ENCODE measurements at regions of chr11 and their contacts with region 1.

Region 1: DNA sequence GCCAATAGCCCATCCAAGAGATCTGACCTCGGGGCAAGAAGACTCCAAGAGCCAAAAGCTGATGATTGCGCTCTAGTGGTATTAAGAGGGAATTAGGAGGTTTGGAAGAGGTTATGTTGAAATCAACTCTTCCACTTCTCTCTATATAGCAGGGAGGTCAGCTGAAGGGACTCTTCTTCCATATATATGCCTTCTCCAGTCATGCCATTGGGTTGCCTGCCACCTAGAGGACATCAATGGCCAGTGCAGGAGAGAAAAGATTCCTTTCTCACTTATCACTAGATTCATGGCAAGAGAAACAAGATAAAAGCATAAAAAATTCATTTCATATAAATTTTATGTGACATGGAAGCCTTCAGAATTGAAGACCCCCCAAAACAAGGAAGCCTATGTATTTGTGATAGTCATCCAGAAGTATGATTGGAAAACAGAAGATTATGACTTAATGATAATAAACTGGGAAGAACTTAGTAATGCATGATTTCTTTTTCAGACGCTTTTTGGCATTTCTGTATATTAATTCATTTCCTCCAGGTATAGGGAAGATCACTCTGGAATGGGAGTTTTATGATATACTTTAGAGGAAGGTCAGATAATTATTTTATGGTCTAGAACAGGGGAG is 435.1 kb upstream of the DDI1 start:
- DNase-seq: peak; percentile 49
- H3K4me3 Mint-ChIP-seq: no peak overlapping the region
- H3K27ac Mint-ChIP-seq: no peak overlapping the region
- H3K4me1 Mint-ChIP-seq: no peaks in the 10 kb centered on the region
- H3K27me3 Mint-ChIP-seq: peaks cover 9% of the 10 kb centered on the region

Region 2: DNA sequence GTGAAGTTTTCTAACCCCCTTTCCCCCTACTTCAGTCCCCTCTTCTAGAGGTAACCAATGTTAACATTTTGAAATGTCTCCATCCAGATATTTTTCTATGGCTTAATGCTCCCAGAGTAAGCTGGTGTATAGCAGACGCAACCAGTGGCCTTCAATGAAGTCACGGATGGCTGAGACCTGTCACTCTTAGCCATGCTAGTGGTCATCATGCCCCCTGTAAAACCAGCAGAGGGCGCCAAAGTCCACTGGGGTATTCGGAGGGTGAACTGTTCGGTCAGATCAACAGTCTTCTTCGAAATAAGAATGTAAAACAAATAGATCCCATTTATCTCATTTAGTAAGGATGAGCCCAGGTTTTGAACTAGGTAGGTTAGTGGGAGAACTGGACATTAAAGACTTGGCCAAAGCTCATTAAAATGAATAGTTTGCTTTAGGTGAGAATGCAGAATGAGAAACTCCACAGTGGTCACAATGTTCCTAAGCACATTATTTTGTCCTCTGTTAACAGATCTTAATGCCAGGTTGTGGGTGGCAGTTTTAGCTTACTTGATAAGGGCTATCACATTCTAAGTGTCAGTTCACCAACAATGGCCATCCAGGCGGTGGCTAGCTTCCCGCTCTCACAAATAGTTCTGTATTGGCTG is 868.0 kb before region 1 on chr11:
- CTCF ChIA-PET with region 1: no interaction called
- intact Hi-C with region 1: loop called (anchors 5 kb)
- DNase-seq: peak; percentile 77
- H3K4me3 Mint-ChIP-seq: no peak overlapping the region
- H3K27ac Mint-ChIP-seq: no peak overlapping the region
- H3K4me1 Mint-ChIP-seq: no peaks in the 10 kb centered on the region
- H3K27me3 Mint-ChIP-seq: peaks cover 4% of the 10 kb centered on the region

Region 3: GRCh38 chr11:102914238-102915043 is 686.9 kb before region 1 on chr11:
- CTCF ChIA-PET with region 1: no interaction called
- intact Hi-C with region 1: loop called (anchors 2 kb)
- DNase-seq: peak; percentile 30
- H3K4me3 Mint-ChIP-seq: no peak overlapping the region
- H3K27ac Mint-ChIP-seq: no peak overlapping the region
- H3K4me1 Mint-ChIP-seq: no peaks in the 10 kb centered on the region
- H3K27me3 Mint-ChIP-seq: peaks cover 11% of the 10 kb centered on the region

Region 4: DNA sequence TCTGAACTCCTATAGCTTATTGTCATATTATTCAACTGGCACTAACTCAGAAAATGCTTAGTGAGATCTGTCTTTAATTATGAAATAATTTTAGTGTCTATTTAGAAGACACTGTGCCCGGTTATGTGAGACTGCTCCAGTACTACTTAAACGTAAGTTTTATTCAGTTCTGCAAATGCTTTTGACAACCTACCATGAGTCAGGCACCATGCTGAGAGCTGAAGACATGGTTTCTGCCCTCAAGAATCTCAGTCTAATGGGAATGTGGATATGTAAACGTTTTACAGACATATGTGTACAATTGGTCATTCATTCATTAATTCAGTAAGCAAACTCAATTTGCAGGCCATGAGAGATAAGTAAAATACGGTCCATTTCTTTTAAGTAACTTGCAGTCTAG is 549.4 kb before region 1 on chr11:
- CTCF ChIA-PET with region 1: no interaction called
- intact Hi-C with region 1: no loop called
- DNase-seq: no peak
- H3K4me3 Mint-ChIP-seq: no peak overlapping the region
- H3K27ac Mint-ChIP-seq: peak overlapping the region; percentile 38
- H3K4me1 Mint-ChIP-seq: peaks cover 17% of the 10 kb centered on the region
- H3K27me3 Mint-ChIP-seq: no peaks in the 10 kb centered on the region

Region 5: DNA sequence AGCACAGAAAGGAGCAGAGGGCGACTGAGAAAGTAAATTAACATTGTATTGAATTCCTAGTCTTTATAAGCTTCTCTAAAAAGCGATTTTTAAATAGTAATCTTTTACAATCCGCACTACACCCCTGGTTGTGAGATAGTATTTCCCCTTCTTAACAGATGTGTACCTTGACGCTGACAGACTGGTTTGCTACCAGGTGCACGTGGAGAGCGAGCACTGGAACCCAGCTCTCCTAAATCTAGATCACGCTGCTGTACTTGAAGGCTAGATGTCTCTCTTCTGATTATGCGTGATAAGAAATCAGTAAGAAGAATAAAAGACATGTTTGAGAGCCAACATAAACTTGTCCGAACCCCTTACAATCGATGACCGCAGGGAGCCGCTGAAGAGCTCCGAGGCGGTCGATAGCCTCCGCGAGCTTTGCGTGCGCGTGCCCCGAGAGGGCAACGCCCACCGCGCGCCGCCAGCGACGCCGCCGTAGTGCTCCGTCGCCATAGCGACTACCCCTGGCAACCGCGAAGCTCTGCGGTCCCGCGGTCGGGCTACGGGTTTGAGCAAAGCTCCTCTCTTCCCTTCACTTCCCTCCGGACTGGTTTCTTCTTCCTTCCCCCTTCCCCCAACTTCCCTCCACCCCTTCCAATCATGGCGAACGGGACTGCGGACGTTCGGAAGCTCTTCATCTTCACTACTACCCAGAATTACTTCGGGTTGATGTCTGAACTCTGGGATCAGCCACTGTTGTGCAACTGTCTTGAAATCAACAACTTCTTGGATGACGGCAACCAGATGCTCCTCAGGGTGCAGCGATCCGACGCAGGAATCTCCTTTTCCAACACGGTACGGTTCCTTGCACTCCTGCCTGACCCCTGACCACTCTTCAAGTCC is 492.2 kb before region 1 on chr11 and contains the start of gene DYNC2H1:
- CTCF ChIA-PET with region 1: no interaction called
- intact Hi-C with region 1: loop called (anchors 1 kb)
- DNase-seq: peak; percentile 90
- H3K4me3 Mint-ChIP-seq: peak within 1 kb of the TSS; percentile 84
- H3K27ac Mint-ChIP-seq: peak within 1 kb of the TSS; percentile 72
- H3K4me1 Mint-ChIP-seq: peaks cover 7% of the 10 kb centered on the region
- H3K27me3 Mint-ChIP-seq: no peaks in the 10 kb centered on the region
- total RNA-seq, gene DYNC2H1: 1.9 to 2.8 TPM

Region 6: DNA sequence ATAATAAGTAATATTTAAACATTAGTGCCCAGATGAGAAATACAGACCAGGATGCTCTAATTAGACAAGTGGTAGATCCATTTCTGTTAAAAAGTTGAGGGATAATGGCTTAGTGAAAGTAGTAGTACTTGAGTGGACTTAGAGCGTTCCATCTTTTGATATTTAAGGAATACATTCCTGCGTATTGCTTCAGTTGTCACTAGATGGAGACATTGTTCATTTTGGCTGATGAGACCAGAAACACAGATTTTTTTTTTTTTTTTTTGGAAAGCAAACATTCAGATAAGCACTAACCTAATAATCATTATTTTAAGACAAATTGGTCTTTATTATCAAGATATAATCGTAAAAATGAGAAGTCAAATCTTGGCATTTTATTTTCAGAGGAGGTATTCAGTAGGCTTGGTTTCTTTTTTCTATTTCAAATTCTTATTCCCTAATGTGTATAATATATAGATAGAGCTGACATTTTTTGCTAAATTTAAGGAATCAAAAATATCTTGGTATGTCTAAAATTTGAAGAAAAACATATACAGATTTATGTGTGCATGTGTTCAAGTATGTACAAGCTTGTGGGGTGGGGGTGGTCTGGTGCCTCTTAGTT is 399.2 kb before region 1 on chr11:
- CTCF ChIA-PET with region 1: no interaction called
- intact Hi-C with region 1: loop called (anchors 1 kb)
- DNase-seq: no peak
- H3K4me3 Mint-ChIP-seq: no peak overlapping the region
- H3K27ac Mint-ChIP-seq: no peak overlapping the region
- H3K4me1 Mint-ChIP-seq: no peaks in the 10 kb centered on the region
- H3K27me3 Mint-ChIP-seq: no peaks in the 10 kb centered on the region

Region 7: DNA sequence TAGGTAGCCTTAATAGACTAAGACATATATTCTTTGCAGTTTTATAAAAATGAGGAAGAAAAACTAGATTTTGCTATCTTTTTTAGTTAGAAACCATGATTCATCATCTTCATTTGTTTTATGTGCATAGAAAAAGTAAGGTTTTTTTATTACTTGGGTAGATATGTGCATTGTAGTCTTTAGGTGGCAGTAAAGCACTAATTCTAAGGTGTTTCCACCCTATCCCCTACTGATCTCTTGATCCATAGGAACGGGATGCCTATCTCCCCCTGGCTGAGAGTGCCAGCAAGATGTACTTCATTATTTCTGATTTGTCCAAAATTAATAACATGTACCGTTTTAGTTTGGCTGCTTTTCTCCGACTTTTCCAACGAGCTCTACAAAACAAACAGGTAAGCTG is 344.0 kb before region 1 on chr11:
- CTCF ChIA-PET with region 1: no interaction called
- intact Hi-C with region 1: loop called (anchors 5 kb)
- DNase-seq: no peak
- H3K4me3 Mint-ChIP-seq: no peak overlapping the region
- H3K27ac Mint-ChIP-seq: no peak overlapping the region
- H3K4me1 Mint-ChIP-seq: no peaks in the 10 kb centered on the region
- H3K27me3 Mint-ChIP-seq: no peaks in the 10 kb centered on the region

Region 8: GRCh38 chr11:103326070-103326794 is 275.1 kb before region 1 on chr11:
- CTCF ChIA-PET with region 1: interaction called, 4 read pairs
- intact Hi-C with region 1: loop called (anchors 1 kb)
- DNase-seq: peak; percentile 37
- H3K4me3 Mint-ChIP-seq: no peak overlapping the region
- H3K27ac Mint-ChIP-seq: no peak overlapping the region
- H3K4me1 Mint-ChIP-seq: peaks cover 4% of the 10 kb centered on the region
- H3K27me3 Mint-ChIP-seq: peaks cover 5% of the 10 kb centered on the region

Region 9: DNA sequence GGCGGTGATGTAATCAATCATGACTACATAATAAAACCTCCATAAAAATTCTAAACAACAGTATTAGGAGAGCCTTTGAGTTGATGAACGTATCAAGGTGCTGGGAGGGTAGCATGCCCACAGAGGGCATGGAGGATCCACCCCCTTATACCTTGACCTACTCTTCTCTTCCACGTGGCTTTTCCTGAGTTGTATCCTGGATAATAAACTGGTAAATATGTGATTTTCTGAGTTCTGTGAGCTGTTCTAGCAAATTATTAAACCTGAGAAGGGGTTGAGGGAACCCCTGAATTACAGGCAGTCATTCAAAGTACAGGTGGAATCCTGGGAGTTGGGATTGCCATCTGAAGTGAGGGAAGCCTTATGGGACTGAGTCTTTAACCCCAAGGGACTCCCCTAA is 45.2 kb before region 1 on chr11:
- CTCF ChIA-PET with region 1: no interaction called
- intact Hi-C with region 1: no loop called
- DNase-seq: no peak
- H3K4me3 Mint-ChIP-seq: no peak overlapping the region
- H3K27ac Mint-ChIP-seq: no peak overlapping the region
- H3K4me1 Mint-ChIP-seq: no peaks in the 10 kb centered on the region
- H3K27me3 Mint-ChIP-seq: peaks cover 4% of the 10 kb centered on the region